ENCODE measurements at regions of chr3 and their contacts with region 1.

Region 1: GRCh38 chr3:37210230-37210629 is 35.8 kb upstream of the LRRFIP2 start:
- DNase-seq: peak; percentile 76
- H3K4me3 ChIP-seq: no peak overlapping the region
- H3K27ac ChIP-seq: peak overlapping the region; percentile 67
- H3K4me1 ChIP-seq: peaks cover 28% of the 10 kb centered on the region
- H3K27me3 ChIP-seq: no peaks in the 10 kb centered on the region
- CTCF ChIP-seq: no peak

Region 2: GRCh38 chr3:36907911-36908646 is 302.2 kb before region 1 on chr3:
- CTCF ChIA-PET with region 1: no interaction called
- dilution Hi-C with region 1: no loop called
- in situ Hi-C with region 1: no loop called
- intact Hi-C with region 1: loop called (anchors 10 kb)
- DNase-seq: peak; percentile 44
- H3K4me3 ChIP-seq: no peak overlapping the region
- H3K27ac ChIP-seq: no peak overlapping the region
- H3K4me1 ChIP-seq: peaks cover 19% of the 10 kb centered on the region
- H3K27me3 ChIP-seq: no peaks in the 10 kb centered on the region
- CTCF ChIP-seq: no peak

Region 3: GRCh38 chr3:37024092-37024491 is 186.1 kb before region 1 on chr3:
- CTCF ChIA-PET with region 1: no interaction called
- dilution Hi-C with region 1: no loop called
- in situ Hi-C with region 1: no loop called
- intact Hi-C with region 1: loop called (anchors 1 kb)
- DNase-seq: no peak
- H3K4me3 ChIP-seq: no peak overlapping the region
- H3K27ac ChIP-seq: no peak overlapping the region
- H3K4me1 ChIP-seq: peaks cover 3% of the 10 kb centered on the region
- H3K27me3 ChIP-seq: no peaks in the 10 kb centered on the region
- CTCF ChIP-seq: peak; percentile 21 to 37

Region 4: GRCh38 chr3:37064747-37065146 is 145.5 kb before region 1 on chr3:
- CTCF ChIA-PET with region 1: no interaction called
- dilution Hi-C with region 1: no loop called
- in situ Hi-C with region 1: no loop called
- intact Hi-C with region 1: loop called (anchors 5 kb)
- DNase-seq: no peak
- H3K4me3 ChIP-seq: no peak overlapping the region
- H3K27ac ChIP-seq: no peak overlapping the region
- H3K4me1 ChIP-seq: no peaks in the 10 kb centered on the region
- H3K27me3 ChIP-seq: no peaks in the 10 kb centered on the region
- CTCF ChIP-seq: no peak

Region 5: DNA sequence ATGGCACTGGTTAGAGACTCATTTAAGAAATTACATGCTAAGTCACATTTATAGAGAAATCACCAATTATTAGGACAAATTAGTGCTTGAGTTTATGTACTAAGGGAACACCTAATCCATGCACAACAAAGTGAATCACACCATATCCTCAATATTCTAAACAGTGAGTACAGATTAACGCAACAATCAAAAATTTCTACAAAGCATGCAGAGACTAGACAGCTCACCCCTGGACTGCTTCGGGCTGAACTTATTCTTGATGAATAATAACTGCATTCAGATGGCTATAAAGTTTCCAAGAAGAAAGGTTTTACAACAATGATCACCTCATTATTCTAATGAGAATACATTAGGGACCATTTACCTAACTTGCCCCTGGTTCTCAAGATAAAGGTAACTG is 102.4 kb before region 1 on chr3:
- CTCF ChIA-PET with region 1: no interaction called
- dilution Hi-C with region 1: no loop called
- in situ Hi-C with region 1: no loop called
- intact Hi-C with region 1: loop called (anchors 5 kb)
- DNase-seq: peak; percentile 11
- H3K4me3 ChIP-seq: no peak overlapping the region
- H3K27ac ChIP-seq: no peak overlapping the region
- H3K4me1 ChIP-seq: no peaks in the 10 kb centered on the region
- H3K27me3 ChIP-seq: no peaks in the 10 kb centered on the region
- CTCF ChIP-seq: no peak

Region 6: GRCh38 chr3:37183375-37183841 is 26.8 kb before region 1 on chr3:
- CTCF ChIA-PET with region 1: interaction called, 5 read pairs
- dilution Hi-C with region 1: no loop called
- in situ Hi-C with region 1: no loop called
- intact Hi-C with region 1: loop called (anchors 1 kb)
- DNase-seq: peak; percentile 98
- H3K4me3 ChIP-seq: no peak overlapping the region
- H3K27ac ChIP-seq: peak overlapping the region; percentile 95
- H3K4me1 ChIP-seq: peaks cover 55% of the 10 kb centered on the region
- H3K27me3 ChIP-seq: no peaks in the 10 kb centered on the region
- CTCF ChIP-seq: no peak

Measured in mammary epithelial cell (primary cell).